ENCODE measurements at regions of chr14 and their contacts with region 1.

Region 1: DNA sequence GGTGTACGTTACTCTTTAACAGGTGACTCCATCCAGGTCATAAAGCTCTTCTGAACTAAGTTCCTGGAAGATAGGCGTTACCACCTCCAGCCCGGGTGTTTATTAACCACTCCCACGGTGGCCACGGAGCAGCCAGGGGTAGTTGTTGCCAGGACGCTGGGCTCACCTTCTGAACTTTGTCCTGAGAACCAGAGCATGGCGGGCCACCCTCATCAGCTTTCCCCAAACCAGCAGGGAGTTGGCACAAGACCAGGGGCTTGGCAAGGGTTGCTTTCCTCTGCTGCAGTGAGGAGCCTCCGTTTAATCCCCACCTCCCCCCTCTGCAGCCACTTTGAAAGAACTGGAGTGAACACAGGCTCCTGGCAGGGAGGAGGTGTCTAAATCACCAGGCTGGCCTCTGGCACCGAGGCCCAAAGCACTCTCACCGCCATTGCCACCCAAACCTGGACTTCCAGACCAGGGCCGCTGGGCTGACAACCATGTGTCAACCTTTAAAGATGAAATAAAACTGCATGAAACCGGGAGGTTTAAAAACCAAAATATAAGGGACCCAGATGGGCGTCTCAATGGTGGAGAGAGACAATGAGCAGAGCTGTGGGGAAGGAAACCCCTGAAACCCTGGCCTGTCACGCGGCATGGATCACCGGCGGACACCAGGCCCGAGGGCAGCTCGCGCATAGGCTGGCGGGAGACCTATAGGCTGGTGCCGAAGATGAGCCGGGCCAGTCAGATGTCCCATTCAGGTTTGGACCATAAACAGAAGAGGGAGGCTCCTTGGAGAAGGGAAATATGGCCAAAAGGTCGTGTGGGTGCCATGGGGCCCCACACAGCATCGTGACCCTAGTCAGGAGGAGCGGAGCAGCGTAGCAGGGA is 30.9 kb upstream of the TDRD9 start:
- DNase-seq: no peak
- CTCF ChIP-seq: no peak

Region 2: GRCh38 chr14:103880348-103881267 is 16.7 kb before region 1 on chr14:
- CTCF ChIA-PET with region 1: interaction called, 33 read pairs
- POLR2A ChIA-PET with region 1: no interaction called
- DNase-seq: no peak
- CTCF ChIP-seq: no peak

Region 3: GRCh38 chr14:103910262-103910935 is 13.1 kb after region 1 on chr14:
- CTCF ChIA-PET with region 1: interaction called, 60 read pairs
- POLR2A ChIA-PET with region 1: no interaction called
- DNase-seq: peak; percentile 82
- CTCF ChIP-seq: peak; percentile 82

Measured in GM10248 (cell line).